ENCODE measurements at regions of chr2 and their contacts with region 1.

Region 1: DNA sequence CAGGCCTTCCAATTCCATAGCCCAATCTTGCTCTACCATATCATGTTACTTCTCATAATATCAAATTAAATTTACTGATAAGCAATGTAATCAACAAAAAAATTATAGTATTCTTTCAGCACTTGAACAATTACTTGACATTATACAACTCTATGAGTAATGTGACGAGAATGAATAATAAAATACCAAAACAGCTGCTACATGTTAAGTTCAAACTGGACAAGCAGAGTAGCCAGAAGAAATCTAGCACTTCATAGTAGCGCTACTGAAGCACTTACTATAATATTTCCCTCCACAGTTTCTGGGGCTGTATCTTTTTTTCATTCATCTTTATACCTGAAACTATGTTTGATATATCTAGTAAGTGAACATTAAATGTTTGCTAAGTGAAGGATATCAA is 14.9 kb downstream of the PPP3R1 start:
- DNase-seq: no peak
- CTCF ChIP-seq: no peak

Region 2: DNA sequence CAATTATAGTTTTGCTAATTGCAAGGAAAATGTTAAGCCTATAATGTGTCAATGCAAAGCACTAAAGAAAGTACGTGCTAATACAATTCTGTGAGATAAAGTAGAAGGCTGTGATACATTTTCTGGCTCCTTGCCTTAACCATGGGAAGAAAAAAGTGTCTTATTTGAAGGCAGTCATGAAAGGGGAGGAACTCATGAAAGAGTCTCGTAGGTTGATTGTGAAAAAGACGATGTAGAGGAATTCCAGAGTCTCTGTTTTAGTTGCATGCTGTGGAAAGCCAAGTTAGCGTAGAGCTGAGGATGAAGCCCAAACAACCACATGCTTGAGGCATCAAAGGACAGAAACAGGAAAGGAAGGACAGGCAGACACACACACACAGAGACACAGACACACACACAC is 1588.4 kb before region 1 on chr2:
- CTCF ChIA-PET with region 1: no interaction called
- POLR2A ChIA-PET with region 1: no interaction called
- DNase-seq: no peak
- CTCF ChIP-seq: no peak

Region 3: DNA sequence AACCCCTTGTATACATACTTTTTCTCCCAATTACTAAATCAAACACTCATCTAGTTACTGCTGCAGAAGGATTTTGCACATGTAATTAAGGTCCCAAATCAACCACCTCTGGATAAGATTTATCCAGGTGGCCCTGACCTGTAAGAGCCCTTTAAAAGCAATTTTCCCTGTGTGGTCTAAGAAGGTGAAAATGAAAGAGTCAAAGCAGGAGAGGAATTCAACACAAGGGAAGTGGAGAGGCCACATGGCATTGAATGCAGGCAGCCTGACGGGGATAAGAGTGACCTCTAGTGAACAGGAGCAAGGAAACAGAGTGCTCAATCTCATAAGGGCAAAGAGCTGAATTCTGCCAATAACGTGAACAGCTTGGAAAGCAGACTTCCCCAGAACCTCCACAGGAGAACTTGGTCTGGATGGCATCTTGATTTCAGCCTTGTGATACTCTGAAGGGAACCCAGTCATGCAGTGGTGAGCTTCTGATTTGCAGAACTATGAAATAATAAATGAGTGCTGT is 12.2 kb before region 1 on chr2:
- CTCF ChIA-PET with region 1: interaction called, 16 read pairs
- POLR2A ChIA-PET with region 1: no interaction called
- DNase-seq: peak; percentile 22
- CTCF ChIP-seq: peak; percentile 61

Region 4: GRCh38 chr2:68251187-68251854 is 13.9 kb after region 1 on chr2:
- CTCF ChIA-PET with region 1: interaction called, 12 read pairs
- POLR2A ChIA-PET with region 1: interaction called, 5 read pairs
- DNase-seq: peak; percentile 72
- CTCF ChIP-seq: peak; percentile 73